ENCODE measurements at regions of chr9 and their contacts with region 1.

Region 1: GRCh38 chr9:109119439-109120203 is at the start of gene TMEM245:
- DNase-seq: peak; percentile 88 to 98 (median 92)
- ATAC-seq: peak; percentile 94
- H3K4me3 ChIP-seq: peak within 1 kb of the TSS; percentile 94
- H3K4me3 Mint-ChIP-seq: peak within 1 kb of the TSS; percentile 97
- H3K27ac ChIP-seq: peak within 1 kb of the TSS; percentile 55 to 68
- H3K27ac Mint-ChIP-seq: peak within 1 kb of the TSS; percentile 84
- H3K4me1 ChIP-seq: peaks cover 47% of the 10 kb centered on the region
- H3K4me1 Mint-ChIP-seq: peaks cover 39% of the 10 kb centered on the region
- H3K27me3 ChIP-seq: no peaks in the 10 kb centered on the region
- H3K27me3 Mint-ChIP-seq: no peaks in the 10 kb centered on the region
- CTCF ChIP-seq: no peak
- total RNA-seq, gene TMEM245: 22.6 to 24.4 TPM

Region 2: DNA sequence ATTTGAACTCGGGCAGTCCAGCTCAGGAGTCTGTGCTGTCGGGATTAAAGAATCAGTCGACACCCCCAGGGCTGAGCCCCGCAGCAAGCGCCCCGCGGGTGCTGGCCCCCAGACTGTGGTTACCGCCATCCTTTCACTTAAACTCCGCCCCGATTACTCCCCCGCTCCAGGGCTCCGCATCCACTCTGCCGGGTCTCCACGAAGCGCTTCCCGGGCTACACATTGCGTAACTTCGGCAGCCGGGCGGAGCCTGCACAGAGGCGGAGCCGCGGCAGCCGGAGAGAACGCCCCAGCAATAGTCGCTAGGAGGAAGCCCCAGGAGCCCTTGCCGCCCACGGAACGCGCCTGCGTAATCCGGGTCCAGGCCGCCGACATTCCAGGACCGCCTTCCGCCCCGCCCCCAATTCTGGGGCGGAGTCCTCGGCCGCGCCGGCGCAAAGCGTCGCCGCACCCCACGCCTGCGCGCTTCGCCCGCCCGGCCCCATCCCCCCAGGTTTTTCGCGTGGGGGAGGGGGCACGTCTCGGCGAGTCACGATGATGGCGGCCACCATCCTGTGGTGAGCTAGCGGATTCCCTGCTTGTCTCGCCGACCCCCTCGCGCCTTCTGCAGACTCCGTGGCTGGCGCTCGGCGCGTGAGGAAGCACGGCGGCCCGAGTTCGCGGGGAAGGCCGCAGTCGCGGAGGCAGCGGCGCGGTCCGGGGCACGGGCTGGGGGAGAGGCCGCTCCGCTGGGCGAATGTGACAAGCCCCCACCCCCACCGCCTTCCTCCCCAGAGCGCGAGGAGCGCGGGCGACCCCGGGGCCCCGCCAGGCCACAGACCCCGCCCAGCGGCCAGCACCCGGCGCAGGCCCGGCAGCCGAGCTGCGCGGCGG is 1836.6 kb before region 1 on chr9 and contains the start of gene RAD23B:
- CTCF ChIA-PET with region 1: interaction called, 3 read pairs
- POLR2A ChIA-PET with region 1: no interaction called
- intact Hi-C with region 1: loop called in 1 of 2 experiments (anchors 10 kb)
- DNase-seq: peak; percentile 95 to 99 (median 98)
- ATAC-seq: peak; percentile 86
- H3K4me3 ChIP-seq: peak within 1 kb of the TSS; percentile 64
- H3K4me3 Mint-ChIP-seq: peak within 1 kb of the TSS; percentile 99
- H3K27ac ChIP-seq: peak within 1 kb of the TSS; percentile 66 to 84
- H3K27ac Mint-ChIP-seq: peak within 1 kb of the TSS; percentile 91
- H3K4me1 ChIP-seq: peaks cover 27% of the 10 kb centered on the region
- H3K4me1 Mint-ChIP-seq: peaks cover 41% of the 10 kb centered on the region
- H3K27me3 ChIP-seq: no peaks in the 10 kb centered on the region
- H3K27me3 Mint-ChIP-seq: no peaks in the 10 kb centered on the region
- CTCF ChIP-seq: no peak
- total RNA-seq, gene RAD23B: 63.8 to 68.1 TPM

Region 3: GRCh38 chr9:108933718-108934322 is 185.8 kb before region 1 on chr9 and contains the start of gene ELP1:
- CTCF ChIA-PET with region 1: no interaction called
- POLR2A ChIA-PET with region 1: interaction called, 8 read pairs
- intact Hi-C with region 1: loop called (anchors 2 to 5 kb)
- DNase-seq: peak; percentile 83 to 97 (median 90)
- ATAC-seq: peak; percentile 88
- H3K4me3 ChIP-seq: peak within 1 kb of the TSS; percentile 97
- H3K4me3 Mint-ChIP-seq: peak within 1 kb of the TSS; percentile 99
- H3K27ac ChIP-seq: peak within 1 kb of the TSS; percentile 77 to 93
- H3K27ac Mint-ChIP-seq: peak within 1 kb of the TSS; percentile 95
- H3K4me1 ChIP-seq: peaks cover 23% of the 10 kb centered on the region
- H3K4me1 Mint-ChIP-seq: peaks cover 57% of the 10 kb centered on the region
- H3K27me3 ChIP-seq: no peaks in the 10 kb centered on the region
- H3K27me3 Mint-ChIP-seq: no peaks in the 10 kb centered on the region
- CTCF ChIP-seq: peak; percentile 39
- total RNA-seq, gene ELP1: 19.2 to 20.8 TPM

Region 4: GRCh38 chr9:109012876-109013678 is 106.5 kb before region 1 on chr9 and contains the start of gene CTNNAL1:
- CTCF ChIA-PET with region 1: interaction called, 3 read pairs
- POLR2A ChIA-PET with region 1: interaction called, 3 read pairs
- intact Hi-C with region 1: loop called (anchors 2 to 5 kb)
- DNase-seq: peak; percentile 68 to 95 (median 85)
- ATAC-seq: peak; percentile 82
- H3K4me3 ChIP-seq: peak within 1 kb of the TSS; percentile 65
- H3K4me3 Mint-ChIP-seq: peak within 1 kb of the TSS; percentile 100
- H3K27ac ChIP-seq: peak within 1 kb of the TSS; percentile 43 to 65
- H3K27ac Mint-ChIP-seq: peak within 1 kb of the TSS; percentile 88
- H3K4me1 ChIP-seq: peaks cover 16% of the 10 kb centered on the region
- H3K4me1 Mint-ChIP-seq: peaks cover 32% of the 10 kb centered on the region
- H3K27me3 ChIP-seq: no peaks in the 10 kb centered on the region
- H3K27me3 Mint-ChIP-seq: peaks cover 10% of the 10 kb centered on the region
- CTCF ChIP-seq: no peak
- total RNA-seq, gene CTNNAL1: 4.9 to 5.3 TPM

Region 5: GRCh38 chr9:109072128-109072692 is 47.4 kb before region 1 on chr9:
- CTCF ChIA-PET with region 1: no interaction called
- POLR2A ChIA-PET with region 1: interaction called, 8 read pairs
- intact Hi-C with region 1: loop called in 1 of 2 experiments (anchors 5 kb)
- DNase-seq: no peak
- ATAC-seq: no peak
- H3K4me3 ChIP-seq: no peak overlapping the region
- H3K4me3 Mint-ChIP-seq: no peak overlapping the region
- H3K27ac ChIP-seq: no peak overlapping the region
- H3K27ac Mint-ChIP-seq: no peak overlapping the region
- H3K4me1 ChIP-seq: no peaks in the 10 kb centered on the region
- H3K4me1 Mint-ChIP-seq: no peaks in the 10 kb centered on the region
- H3K27me3 ChIP-seq: no peaks in the 10 kb centered on the region
- H3K27me3 Mint-ChIP-seq: no peaks in the 10 kb centered on the region
- CTCF ChIP-seq: no peak

Region 6: DNA sequence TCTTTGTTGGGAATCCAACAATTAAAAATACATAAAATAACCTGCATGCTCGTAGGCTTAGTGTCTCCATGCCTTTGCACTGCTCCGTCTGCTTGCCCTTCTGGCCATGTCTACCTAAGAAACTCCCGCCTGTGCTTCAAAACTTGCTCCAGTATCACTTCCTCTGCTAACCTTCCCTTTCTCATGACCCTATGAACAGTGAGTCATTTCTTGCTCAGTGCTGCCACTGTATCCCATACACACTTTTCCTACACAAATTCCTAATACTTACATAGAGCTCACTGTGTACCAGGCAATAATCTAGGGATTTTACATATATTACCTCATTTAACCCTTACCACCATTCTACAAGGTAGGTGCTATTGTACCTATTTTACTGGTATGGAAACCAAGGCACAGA is 33.4 kb before region 1 on chr9:
- CTCF ChIA-PET with region 1: interaction called, 3 read pairs
- POLR2A ChIA-PET with region 1: interaction called, 9 read pairs
- intact Hi-C with region 1: loop called in 1 of 2 experiments (anchors 5 kb)
- DNase-seq: peak in 2 of 14 experiments; percentile 25 to 30
- ATAC-seq: no peak
- H3K4me3 ChIP-seq: no peak overlapping the region
- H3K4me3 Mint-ChIP-seq: no peak overlapping the region
- H3K27ac ChIP-seq: no peak overlapping the region
- H3K27ac Mint-ChIP-seq: no peak overlapping the region
- H3K4me1 ChIP-seq: no peaks in the 10 kb centered on the region
- H3K4me1 Mint-ChIP-seq: peaks cover 22% of the 10 kb centered on the region
- H3K27me3 ChIP-seq: no peaks in the 10 kb centered on the region
- H3K27me3 Mint-ChIP-seq: no peaks in the 10 kb centered on the region
- CTCF ChIP-seq: no peak

Region 7: DNA sequence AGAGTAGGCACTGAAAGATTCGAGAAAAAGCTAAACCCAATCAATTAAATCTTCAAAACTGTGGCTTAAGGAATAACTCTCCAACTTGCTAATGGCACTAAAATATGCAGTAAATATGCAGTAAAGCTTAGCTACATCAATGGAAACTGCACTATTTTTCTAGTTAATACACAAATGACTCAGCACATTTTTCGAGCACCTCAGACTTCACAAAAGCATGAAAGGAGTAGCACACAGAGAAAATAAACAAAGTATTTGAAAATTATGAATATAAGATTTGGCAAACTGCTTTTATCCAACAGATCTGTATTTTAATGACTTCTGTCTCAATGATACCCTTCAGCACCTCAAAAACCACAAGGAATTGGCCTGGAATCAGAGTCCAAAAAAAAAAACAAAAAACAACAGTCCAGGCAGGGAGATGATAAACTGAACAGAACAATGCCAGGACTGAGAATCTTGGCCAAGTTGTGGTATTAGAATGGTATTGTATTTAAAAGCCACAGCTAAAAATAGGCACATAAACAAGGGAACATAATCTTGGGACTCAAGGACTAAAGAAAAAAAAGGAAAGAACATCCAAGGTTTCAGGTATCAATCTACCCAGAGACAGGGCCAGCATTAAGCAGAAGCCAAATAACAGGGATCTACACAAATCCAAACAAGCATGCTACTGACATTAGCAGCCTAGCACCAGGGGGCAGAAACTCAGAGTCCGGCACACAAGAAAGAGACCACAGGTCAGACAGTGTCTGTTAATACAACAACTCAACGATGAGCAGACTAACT is 21.3 kb before region 1 on chr9:
- CTCF ChIA-PET with region 1: no interaction called
- POLR2A ChIA-PET with region 1: interaction called, 31 read pairs
- intact Hi-C with region 1: loop called (anchors 2 kb)
- DNase-seq: no peak
- ATAC-seq: no peak
- H3K4me3 ChIP-seq: no peak overlapping the region
- H3K4me3 Mint-ChIP-seq: peak overlapping the region; percentile 11
- H3K27ac ChIP-seq: no peak overlapping the region
- H3K27ac Mint-ChIP-seq: peak overlapping the region; percentile 69
- H3K4me1 ChIP-seq: peaks cover 52% of the 10 kb centered on the region
- H3K4me1 Mint-ChIP-seq: peaks cover 95% of the 10 kb centered on the region
- H3K27me3 ChIP-seq: no peaks in the 10 kb centered on the region
- H3K27me3 Mint-ChIP-seq: no peaks in the 10 kb centered on the region
- CTCF ChIP-seq: no peak

Region 8: GRCh38 chr9:110357505-110357904 is 1237.9 kb after region 1 on chr9:
- CTCF ChIA-PET with region 1: no interaction called
- POLR2A ChIA-PET with region 1: no interaction called
- intact Hi-C with region 1: no loop called
- DNase-seq: no peak
- ATAC-seq: no peak
- H3K4me3 ChIP-seq: no peak overlapping the region
- H3K4me3 Mint-ChIP-seq: no peak overlapping the region
- H3K27ac ChIP-seq: no peak overlapping the region
- H3K27ac Mint-ChIP-seq: no peak overlapping the region
- H3K4me1 ChIP-seq: no peaks in the 10 kb centered on the region
- H3K4me1 Mint-ChIP-seq: no peaks in the 10 kb centered on the region
- H3K27me3 ChIP-seq: no peaks in the 10 kb centered on the region
- H3K27me3 Mint-ChIP-seq: no peaks in the 10 kb centered on the region
- CTCF ChIP-seq: no peak

Measured in CD4-positive, alpha-beta T cell (primary cell).